GM18951 (cell line): ENCODE measurements at regions of chr13 and their contacts with region 1.

Region 1: DNA sequence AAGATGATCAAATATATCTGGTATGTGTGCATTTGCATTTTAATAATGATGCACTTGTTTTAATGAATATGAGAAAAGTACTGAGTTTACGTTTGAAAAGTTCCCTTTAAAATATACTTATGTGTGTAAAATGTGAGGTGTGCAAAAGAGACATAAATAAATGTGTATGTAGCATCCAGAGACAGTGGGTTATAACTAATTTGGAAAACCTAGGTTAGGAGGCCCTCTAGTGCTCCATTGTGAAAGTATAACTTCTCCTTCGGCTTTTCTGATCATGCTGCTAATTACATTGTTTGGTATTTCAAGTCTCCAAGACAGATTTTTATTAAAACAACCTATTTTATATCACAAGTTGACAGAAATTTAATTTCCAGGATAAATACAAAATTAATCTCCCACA is 30.1 kb downstream of the SCEL start:
- POLR2A ChIP-seq: no peak

Region 2: GRCh38 chr13:77285098-77285497 is 280.5 kb before region 1 on chr13:
- in situ Hi-C with region 1: loop called (anchors 10 kb)
- POLR2A ChIP-seq: no peak

Region 3: DNA sequence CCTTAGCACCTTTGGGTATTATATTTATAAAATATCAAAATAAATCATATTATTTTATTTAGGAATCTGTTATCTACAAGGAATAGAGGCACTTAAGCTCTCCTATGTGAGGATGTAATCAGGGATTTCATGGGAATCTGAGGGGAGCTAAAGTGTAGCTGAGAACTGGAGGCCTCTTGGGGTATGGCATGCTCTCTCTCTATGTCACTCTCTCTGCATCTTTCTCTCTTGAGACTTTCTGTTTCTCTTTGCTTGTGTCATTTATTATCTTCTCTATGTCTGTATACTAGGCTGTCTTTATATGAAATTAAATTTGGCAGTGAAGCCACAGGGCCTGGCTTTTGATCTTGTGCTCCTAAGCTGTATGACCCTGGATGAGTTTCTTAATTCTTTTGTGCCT is 67.8 kb before region 1 on chr13:
- in situ Hi-C with region 1: loop called (anchors 5 kb)
- POLR2A ChIP-seq: no peak